ENCODE measurements at regions of chr19 and their contacts with region 1.

Region 1: GRCh38 chr19:27905074-27905473 is 1307.9 kb downstream of the UQCRFS1 start:
- DNase-seq: no peak
- ATAC-seq: no peak
- H3K4me3 ChIP-seq: no peak overlapping the region
- H3K27ac ChIP-seq: no peak overlapping the region
- H3K4me1 ChIP-seq: no peaks in the 10 kb centered on the region
- H3K27me3 ChIP-seq: no peaks in the 10 kb centered on the region
- CTCF ChIP-seq: no peak

Region 2: GRCh38 chr19:27822336-27822735 is 82.7 kb before region 1 on chr19:
- CTCF ChIA-PET with region 1: no interaction called
- POLR2A ChIA-PET with region 1: no interaction called
- in situ Hi-C with region 1: no loop called
- intact Hi-C with region 1: no loop called
- DNase-seq: no peak
- ATAC-seq: no peak
- H3K4me3 ChIP-seq: no peak overlapping the region
- H3K27ac ChIP-seq: no peak overlapping the region
- H3K4me1 ChIP-seq: no peaks in the 10 kb centered on the region
- H3K27me3 ChIP-seq: no peaks in the 10 kb centered on the region
- CTCF ChIP-seq: no peak

Region 3: DNA sequence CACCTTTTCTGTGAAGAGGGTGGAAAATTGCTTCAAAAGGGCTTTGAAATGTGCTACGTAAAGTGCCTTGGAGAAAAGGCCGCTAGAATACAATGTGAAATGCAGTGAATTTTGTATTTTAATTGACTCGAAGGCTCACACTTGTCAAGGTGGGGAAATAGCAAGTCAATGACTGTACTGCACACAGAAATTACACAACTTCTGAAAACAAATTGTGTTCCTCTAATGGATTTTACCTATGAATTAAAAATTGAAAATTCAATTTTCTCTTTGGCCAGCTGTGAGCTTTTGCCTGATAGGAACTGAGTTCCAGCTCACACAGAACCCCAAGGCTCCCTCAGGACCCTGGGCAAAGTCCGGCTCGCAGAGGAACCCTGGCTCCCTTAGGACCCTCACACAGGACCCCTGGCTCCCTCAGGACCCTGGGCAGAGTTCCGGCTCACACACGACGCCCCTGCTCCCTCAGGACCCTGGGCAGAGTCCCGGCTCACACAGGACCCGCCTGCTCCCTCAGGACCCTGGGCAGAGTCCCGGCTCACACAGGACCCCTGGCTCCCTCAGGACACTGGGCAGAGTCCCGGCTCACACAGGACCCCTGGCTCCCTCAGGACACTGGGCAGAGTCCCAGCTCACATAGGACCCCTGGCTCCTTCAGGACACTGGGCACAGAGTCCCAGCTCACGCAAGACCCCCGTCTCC is 983.0 kb after region 1 on chr19:
- CTCF ChIA-PET with region 1: no interaction called
- POLR2A ChIA-PET with region 1: interaction called, 24 read pairs
- in situ Hi-C with region 1: no loop called
- intact Hi-C with region 1: no loop called
- DNase-seq: no peak
- ATAC-seq: 0 out of 2 replicates have a peak, but pooled peaks have one; percentile 21
- H3K4me3 ChIP-seq: no peak overlapping the region
- H3K27ac ChIP-seq: no peak overlapping the region
- H3K4me1 ChIP-seq: no peaks in the 10 kb centered on the region
- H3K27me3 ChIP-seq: peaks cover 9% of the 10 kb centered on the region
- CTCF ChIP-seq: no peak

Measured in Panc1 (cell line).